IMR-90 (cell line): ENCODE measurements at regions of chr13 and their contacts with region 1.

Region 1: DNA sequence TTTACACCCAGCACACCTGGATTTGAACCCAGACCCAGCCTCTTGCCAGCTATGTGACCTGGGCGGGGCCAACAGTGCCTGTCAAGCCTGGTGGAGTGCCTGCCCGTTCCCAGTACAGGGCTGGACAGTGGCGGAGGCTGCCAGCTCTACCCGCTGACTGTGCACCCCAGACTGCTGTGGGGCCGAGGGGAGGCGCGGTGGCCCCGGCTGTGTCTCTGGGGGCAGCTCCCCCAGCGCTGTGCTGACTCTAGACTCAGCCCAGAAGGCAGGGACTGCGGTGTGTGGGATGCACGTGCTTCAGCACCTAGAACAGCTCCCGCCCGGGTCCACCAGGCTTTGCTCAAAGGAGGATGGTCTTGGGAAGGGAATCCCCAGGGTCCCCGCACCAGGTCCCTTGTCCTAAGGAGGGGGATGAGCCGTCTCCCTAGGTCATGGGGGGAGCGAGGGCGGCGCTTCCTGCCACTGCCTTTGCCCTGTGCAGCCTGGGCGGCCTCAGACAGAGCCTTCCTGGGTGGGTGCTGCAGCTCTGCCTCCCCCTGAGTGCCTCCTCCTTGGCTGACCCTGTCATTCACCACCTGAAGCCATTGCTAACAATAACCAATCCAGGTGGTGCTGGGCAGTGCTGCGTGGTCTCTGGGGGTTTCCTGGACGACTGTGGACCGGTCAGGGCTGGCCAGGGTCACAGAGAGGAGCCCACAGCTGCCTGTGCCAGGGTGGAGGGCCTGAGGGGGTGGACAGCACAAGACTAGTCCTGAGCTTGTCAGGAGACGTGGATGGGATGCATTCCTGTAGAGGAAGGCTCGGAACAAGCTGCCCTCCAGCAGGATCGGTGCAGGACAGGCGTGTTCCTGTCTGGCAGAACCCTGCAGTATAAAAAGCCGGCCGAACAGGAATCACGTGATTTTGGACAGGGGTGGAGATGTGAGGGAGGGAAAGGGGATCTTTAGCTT is 18.6 kb downstream of the TMEM255B start:
- DNase-seq: peak; percentile 17
- ATAC-seq: peak; percentile 91
- H3K4me3 ChIP-seq: no peak overlapping the region
- H3K27ac ChIP-seq: no peak overlapping the region
- H3K4me1 ChIP-seq: no peaks in the 10 kb centered on the region
- H3K27me3 ChIP-seq: peaks cover 16% of the 10 kb centered on the region
- CTCF ChIP-seq: no peak
- POLR2A ChIP-seq: no peak
- RAD21 ChIP-seq: no peak

Region 2: GRCh38 chr13:113758651-113759524 is 18.7 kb before region 1 on chr13 and contains the start of gene TMEM255B:
- CTCF ChIA-PET with region 1: no interaction called
- POLR2A ChIA-PET with region 1: no interaction called
- dilution Hi-C with region 1: no loop called
- in situ Hi-C with region 1: no loop called
- intact Hi-C with region 1: loop called (anchors 2 kb)
- DNase-seq: peak; percentile 49
- ATAC-seq: peak; percentile 98
- H3K4me3 ChIP-seq: peak within 1 kb of the TSS; percentile 52
- H3K27ac ChIP-seq: no peak within 1 kb of the TSS; the same call in 1 of the 2 replicates
- H3K4me1 ChIP-seq: peaks cover 3% of the 10 kb centered on the region; the same call in 1 of the 2 replicates
- H3K27me3 ChIP-seq: peaks cover 51% of the 10 kb centered on the region
- CTCF ChIP-seq: 0 out of 2 replicates have a peak, but pooled peaks have one; percentile 14
- POLR2A ChIP-seq: no peak
- RAD21 ChIP-seq: no peak
- total RNA-seq, gene TMEM255B: 0.36 and 0.83 TPM in 2 replicates